RWPE1 (cell line): ENCODE measurements at regions of chr17 and their contacts with region 1.

Region 1: DNA sequence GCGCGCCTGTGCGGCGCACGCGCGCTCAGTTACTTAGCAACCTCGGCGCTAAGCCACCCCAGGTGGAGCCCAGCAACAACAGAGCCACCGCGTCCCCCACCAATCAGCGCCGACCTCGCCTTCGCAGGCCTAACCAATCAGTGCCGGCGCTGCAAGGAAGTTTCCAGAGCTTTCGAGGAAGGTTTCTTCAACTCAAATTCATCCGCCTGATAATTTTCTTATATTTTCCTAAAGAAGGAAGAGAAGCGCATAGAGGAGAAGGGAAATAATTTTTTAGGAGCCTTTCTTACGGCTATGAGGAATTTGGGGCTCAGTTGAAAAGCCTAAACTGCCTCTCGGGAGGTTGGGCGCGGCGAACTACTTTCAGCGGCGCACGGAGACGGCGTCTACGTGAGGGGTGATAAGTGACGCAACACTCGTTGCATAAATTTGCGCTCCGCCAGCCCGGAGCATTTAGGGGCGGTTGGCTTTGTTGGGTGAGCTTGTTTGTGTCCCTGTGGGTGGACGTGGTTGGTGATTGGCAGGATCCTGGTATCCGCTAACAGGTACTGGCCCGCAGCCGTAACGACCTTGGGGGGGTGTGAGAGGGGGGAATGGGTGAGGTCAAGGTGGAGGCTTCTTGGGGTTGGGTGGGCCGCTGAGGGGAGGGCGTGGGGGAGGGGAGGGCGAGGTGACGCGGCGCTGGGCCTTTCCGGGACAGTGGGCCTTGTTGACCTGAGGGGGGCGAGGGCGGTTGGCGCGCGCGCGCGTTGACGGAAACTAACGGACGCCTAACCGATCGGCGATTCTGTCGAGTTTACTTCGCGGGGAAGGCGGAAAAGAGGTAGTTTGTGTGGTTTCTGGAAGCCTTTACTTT is at the start of gene UBB:
- DNase-seq: peak; percentile 94
- H3K27ac ChIP-seq: peak within 1 kb of the TSS; percentile 92
- CTCF ChIP-seq: no peak

Region 2: DNA sequence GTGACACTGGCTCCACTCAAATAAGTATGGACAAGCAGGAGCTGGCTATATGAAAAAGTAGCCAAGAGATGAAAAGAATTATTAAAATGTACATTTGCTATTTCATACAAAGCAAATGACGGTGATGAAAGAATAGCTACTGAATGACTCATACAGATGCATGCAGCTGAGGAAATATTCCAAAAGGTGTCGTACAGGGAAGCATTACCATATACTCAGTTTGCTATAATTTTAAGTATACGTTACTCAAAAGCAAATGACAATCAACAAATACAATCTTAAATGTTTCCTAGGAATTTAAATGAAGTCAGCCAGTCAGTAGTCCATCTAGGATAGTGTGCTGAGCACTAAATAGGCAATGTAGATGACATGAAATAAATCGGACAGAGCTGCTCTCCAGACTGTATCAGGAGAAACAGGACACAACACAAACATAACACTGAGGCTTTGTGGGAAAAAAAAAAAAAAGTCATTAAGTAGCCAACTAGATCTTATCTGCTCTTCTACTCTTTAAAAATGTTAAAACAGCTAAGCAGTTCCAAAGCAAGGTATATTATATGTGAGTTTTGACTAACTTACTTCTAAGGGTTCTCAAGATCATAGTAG is 230.5 kb before region 1 on chr17:
- CTCF ChIA-PET with region 1: no interaction called
- POLR2A ChIA-PET with region 1: no interaction called
- DNase-seq: peak; percentile 59
- H3K27ac ChIP-seq: no peak overlapping the region
- CTCF ChIP-seq: no peak

Region 3: GRCh38 chr17:16391451-16391850 is 10.6 kb after region 1 on chr17:
- CTCF ChIA-PET with region 1: no interaction called
- POLR2A ChIA-PET with region 1: no interaction called
- DNase-seq: no peak
- H3K27ac ChIP-seq: no peak overlapping the region
- CTCF ChIP-seq: no peak

Region 4: GRCh38 chr17:16407911-16408588 is 27.2 kb after region 1 on chr17:
- CTCF ChIA-PET with region 1: no interaction called
- POLR2A ChIA-PET with region 1: no interaction called
- DNase-seq: peak; percentile 38
- H3K27ac ChIP-seq: peak overlapping the region; percentile 91
- CTCF ChIP-seq: no peak

Region 5: DNA sequence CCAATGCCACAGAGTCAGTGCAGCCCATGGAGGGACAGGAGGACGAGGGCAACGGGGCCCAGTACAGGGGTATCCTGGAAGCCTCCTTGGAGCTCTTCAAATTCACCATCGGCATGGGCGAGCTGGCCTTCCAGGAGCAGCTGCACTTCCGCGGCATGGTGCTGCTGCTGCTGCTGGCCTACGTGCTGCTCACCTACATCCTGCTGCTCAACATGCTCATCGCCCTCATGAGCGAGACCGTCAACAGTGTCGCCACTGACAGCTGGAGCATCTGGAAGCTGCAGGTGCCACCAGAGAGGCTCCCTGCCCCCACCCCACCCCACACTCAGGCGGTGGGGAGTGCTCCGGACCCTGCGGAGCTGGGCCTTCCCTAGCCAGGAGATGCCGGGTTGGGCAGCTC is 51.1 kb after region 1 on chr17:
- CTCF ChIA-PET with region 1: no interaction called
- POLR2A ChIA-PET with region 1: interaction called, 13 read pairs
- DNase-seq: no peak
- H3K27ac ChIP-seq: no peak overlapping the region
- CTCF ChIP-seq: no peak

Region 6: DNA sequence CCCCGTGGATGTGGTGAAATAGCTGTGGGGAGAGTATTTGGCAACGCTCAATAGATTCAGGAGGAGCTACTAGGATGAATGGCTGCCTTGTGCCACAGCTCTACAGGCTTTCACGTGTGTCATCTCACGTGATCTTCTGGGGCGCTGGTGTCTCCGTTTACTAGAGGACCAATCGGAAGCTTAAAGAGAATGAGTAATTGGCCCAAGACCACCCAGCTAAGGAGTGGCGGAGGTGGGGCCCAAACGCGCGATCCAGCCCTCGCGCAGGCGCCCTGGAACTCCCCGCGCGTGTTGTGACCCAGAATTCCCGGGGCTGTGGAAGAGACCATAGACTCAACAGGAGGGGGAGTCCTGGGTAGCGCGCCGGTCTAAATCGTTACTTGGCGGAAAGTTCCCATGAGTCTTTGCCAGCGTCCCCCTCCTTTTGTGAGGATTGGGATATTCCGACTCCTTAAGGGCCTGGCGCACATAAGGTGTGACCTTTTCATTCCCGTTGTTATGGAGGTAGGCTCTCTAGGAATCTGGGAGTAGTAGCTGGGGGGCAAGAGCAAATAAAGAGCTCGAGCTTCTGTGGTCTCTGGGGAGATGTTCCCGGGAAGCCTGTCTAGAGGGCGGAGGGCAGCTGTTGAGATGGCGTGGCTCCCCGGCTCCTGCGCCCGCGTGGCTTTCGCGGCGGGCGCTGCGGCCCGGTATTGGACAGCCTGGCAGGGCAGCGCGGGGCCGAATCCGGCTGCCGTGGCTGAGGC is 57.9 kb after region 1 on chr17:
- CTCF ChIA-PET with region 1: interaction called, 4 read pairs
- POLR2A ChIA-PET with region 1: interaction called, 13 read pairs
- DNase-seq: peak; percentile 99
- H3K27ac ChIP-seq: peak overlapping the region; percentile 94
- CTCF ChIP-seq: no peak